CD4-positive, alpha-beta memory T cell (primary cell): ENCODE measurements at regions of chr18 and their contacts with region 1.

Region 1: DNA sequence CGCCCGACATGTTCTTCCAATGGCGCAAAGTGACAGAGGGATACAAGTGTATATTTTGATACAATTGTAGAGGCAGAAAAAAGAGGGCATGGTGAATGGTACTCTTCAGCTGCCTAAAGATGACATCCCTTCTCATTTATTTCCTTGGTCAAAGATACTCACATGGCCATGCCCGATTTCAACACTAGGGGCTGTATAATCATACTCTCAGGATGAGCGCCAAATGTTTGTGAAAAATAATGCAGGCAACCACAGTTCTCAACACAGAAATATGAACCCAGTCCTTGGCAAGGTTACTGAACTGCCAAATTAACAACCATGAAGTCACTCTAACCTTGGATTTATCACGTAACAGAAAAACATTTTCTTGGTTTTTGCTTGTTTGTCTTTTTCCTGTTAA is 204.4 kb downstream of the CCDC102B start:
- DNase-seq: no peak
- H3K4me3 ChIP-seq: no peak overlapping the region
- H3K4me3 Mint-ChIP-seq: no peak overlapping the region
- H3K27ac ChIP-seq: no peak overlapping the region
- H3K27ac Mint-ChIP-seq: no peak overlapping the region
- H3K4me1 ChIP-seq: no peaks in the 10 kb centered on the region
- H3K4me1 Mint-ChIP-seq: no peaks in the 10 kb centered on the region
- H3K27me3 ChIP-seq: no peaks in the 10 kb centered on the region
- H3K27me3 Mint-ChIP-seq: no peaks in the 10 kb centered on the region

Region 2: DNA sequence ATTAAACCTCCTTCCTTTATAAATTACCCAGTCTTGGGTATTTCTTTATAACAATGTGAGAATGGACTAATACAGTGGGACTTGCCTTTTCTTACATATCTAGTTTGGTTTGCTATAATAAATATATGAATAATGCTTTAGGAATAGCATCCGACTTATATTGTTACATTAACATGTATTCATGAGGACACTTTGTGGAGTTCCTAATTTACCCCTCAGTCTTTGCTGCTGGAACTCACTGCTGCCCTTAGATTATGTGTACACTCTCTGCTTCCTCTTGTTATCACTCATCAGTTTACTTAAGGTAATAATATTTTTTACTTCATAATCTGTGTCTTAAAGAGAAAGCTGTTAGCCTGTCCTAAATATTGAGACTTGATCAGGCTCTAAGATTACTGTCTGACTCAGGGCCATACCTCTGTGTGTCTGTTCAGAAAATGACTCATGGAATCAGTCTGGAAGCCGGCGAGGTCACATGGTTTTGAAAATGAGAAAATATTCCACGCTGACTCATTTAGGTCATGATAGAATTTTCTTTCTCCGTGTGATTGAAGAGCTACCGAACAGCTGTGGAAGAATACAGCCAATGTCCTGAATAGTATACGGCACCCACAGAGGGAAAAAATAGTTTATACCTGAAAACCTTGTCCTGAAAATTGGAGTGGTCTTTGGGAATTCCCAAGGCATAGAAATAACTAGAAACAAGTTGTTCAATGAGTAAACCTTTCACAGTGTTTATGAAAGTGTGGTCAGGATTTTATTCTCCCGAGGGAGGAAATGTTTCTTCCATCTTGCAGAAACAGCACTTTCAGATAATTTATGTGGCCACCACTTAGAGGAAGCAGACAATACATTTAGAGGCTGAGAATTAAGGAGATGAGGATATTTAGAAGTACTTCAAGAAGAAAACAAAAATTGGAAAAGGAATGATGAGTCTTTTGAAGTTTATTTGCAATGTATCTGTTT is 1642.1 kb before region 1 on chr18:
- CTCF ChIA-PET with region 1: no interaction called
- POLR2A ChIA-PET with region 1: no interaction called
- intact Hi-C with region 1: loop called (anchors 10 kb)
- DNase-seq: peak in 1 of 5 donors; percentile 68
- H3K4me3 ChIP-seq: no peak overlapping the region
- H3K4me3 Mint-ChIP-seq: peak overlapping the region in 4 of 8 donors; percentile 0 to 55 (median 28)
- H3K27ac ChIP-seq: no peak overlapping the region
- H3K27ac Mint-ChIP-seq: peak overlapping the region in 2 of 7 donors; percentile 30 to 39
- H3K4me1 ChIP-seq: peaks cover 4% of the 10 kb centered on the region
- H3K4me1 Mint-ChIP-seq: peaks cover 7 to 10% (median 9%) of the 10 kb centered on the region in 4 donors
- H3K27me3 ChIP-seq: no peaks in the 10 kb centered on the region
- H3K27me3 Mint-ChIP-seq: no peaks in the 10 kb centered on the region

Region 3: DNA sequence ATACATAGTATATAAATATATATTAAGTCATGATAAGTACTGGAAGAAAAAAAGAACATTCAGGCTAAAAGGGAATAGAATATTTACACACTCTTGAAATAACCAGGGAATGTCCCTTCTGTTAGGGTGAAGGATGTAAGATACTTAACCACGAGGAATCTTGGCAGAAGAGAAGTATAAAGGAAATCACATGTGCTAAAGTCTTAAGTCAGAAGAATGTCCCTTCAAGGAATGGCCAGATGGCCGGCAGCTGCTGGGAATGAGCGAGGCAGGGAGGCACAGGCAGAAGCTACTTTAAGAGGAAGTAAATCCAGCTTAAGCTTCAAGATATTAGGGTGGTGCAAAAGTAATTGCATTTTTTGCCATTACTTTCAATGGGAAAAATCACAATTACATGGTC is 198.9 kb before region 1 on chr18:
- CTCF ChIA-PET with region 1: no interaction called
- POLR2A ChIA-PET with region 1: no interaction called
- intact Hi-C with region 1: no loop called
- DNase-seq: no peak
- H3K4me3 ChIP-seq: no peak overlapping the region
- H3K4me3 Mint-ChIP-seq: no peak overlapping the region
- H3K27ac ChIP-seq: no peak overlapping the region
- H3K27ac Mint-ChIP-seq: no peak overlapping the region
- H3K4me1 ChIP-seq: no peaks in the 10 kb centered on the region
- H3K4me1 Mint-ChIP-seq: no peaks in the 10 kb centered on the region
- H3K27me3 ChIP-seq: no peaks in the 10 kb centered on the region
- H3K27me3 Mint-ChIP-seq: no peaks in the 10 kb centered on the region

Region 4: GRCh38 chr18:68928762-68929675 is 73.2 kb before region 1 on chr18:
- CTCF ChIA-PET with region 1: no interaction called
- POLR2A ChIA-PET with region 1: no interaction called
- intact Hi-C with region 1: no loop called
- DNase-seq: no peak
- H3K4me3 ChIP-seq: no peak overlapping the region
- H3K4me3 Mint-ChIP-seq: no peak overlapping the region
- H3K27ac ChIP-seq: no peak overlapping the region
- H3K27ac Mint-ChIP-seq: no peak overlapping the region
- H3K4me1 ChIP-seq: no peaks in the 10 kb centered on the region
- H3K4me1 Mint-ChIP-seq: no peaks in the 10 kb centered on the region
- H3K27me3 ChIP-seq: no peaks in the 10 kb centered on the region
- H3K27me3 Mint-ChIP-seq: no peaks in the 10 kb centered on the region

Region 5: GRCh38 chr18:69120833-69121232 is 118.6 kb after region 1 on chr18:
- CTCF ChIA-PET with region 1: no interaction called
- POLR2A ChIA-PET with region 1: no interaction called
- intact Hi-C with region 1: no loop called
- DNase-seq: no peak
- H3K4me3 ChIP-seq: no peak overlapping the region
- H3K4me3 Mint-ChIP-seq: no peak overlapping the region
- H3K27ac ChIP-seq: no peak overlapping the region
- H3K27ac Mint-ChIP-seq: no peak overlapping the region
- H3K4me1 ChIP-seq: no peaks in the 10 kb centered on the region
- H3K4me1 Mint-ChIP-seq: no peaks in the 10 kb centered on the region
- H3K27me3 ChIP-seq: no peaks in the 10 kb centered on the region
- H3K27me3 Mint-ChIP-seq: peaks cover 1% of the 10 kb centered on the region in 2 donors